ENCODE measurements at regions of chr7 and their contacts with region 1.

Region 1: GRCh38 chr7:104529567-104529966 is 201.2 kb downstream of the LHFPL3 start:
- DNase-seq: no peak
- H3K4me3 ChIP-seq: no peak overlapping the region
- H3K27ac ChIP-seq: no peak overlapping the region
- H3K4me1 ChIP-seq: no peaks in the 10 kb centered on the region
- H3K27me3 ChIP-seq: no peaks in the 10 kb centered on the region
- CTCF ChIP-seq: no peak

Region 2: DNA sequence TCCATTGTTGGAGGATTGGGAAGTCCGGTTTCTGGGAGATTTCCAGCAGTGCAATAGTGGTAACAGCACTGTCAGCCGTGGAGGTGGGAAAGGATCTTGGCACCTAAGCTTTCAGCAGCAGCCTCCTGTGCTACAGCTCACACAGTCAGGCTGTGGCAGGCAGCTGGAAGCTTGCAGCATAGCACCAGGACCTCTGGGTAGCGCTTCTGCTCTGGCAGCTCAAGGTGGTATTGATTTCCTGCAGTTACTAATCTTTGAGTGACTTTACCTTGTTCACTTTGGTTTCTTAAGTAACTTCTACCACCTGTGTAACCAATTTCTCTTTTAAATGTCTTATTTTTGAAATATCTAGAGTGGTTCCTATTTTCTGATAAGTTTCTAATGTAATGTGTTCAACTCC is 70.7 kb before region 1 on chr7:
- CTCF ChIA-PET with region 1: no interaction called
- dilution Hi-C with region 1: loop called (anchors 5 kb)
- in situ Hi-C with region 1: no loop called
- intact Hi-C with region 1: no loop called
- DNase-seq: no peak
- H3K4me3 ChIP-seq: no peak overlapping the region
- H3K27ac ChIP-seq: no peak overlapping the region
- H3K4me1 ChIP-seq: no peaks in the 10 kb centered on the region
- H3K27me3 ChIP-seq: no peaks in the 10 kb centered on the region
- CTCF ChIP-seq: no peak

Region 3: DNA sequence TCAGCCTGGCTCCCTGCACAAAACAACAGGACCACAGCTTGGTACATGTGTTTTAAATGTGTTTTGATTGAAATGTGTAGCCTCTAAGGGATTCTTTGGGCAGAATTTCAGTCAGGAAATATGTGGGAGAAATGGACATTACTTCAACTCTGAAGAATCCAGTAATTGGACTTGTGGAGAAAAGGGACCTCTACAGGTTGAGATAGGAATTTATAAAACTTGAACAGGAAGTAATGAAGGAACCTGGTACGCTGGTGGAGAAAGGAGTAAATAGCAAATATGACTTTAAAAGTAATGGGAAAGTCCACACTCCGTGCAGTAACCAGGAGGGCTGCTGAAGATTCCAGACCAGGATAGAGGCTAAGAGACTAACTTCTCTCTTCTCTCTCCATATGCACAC is 19.3 kb after region 1 on chr7:
- CTCF ChIA-PET with region 1: interaction called, 12 read pairs
- dilution Hi-C with region 1: no loop called
- in situ Hi-C with region 1: no loop called
- intact Hi-C with region 1: no loop called
- DNase-seq: no peak
- H3K4me3 ChIP-seq: no peak overlapping the region
- H3K27ac ChIP-seq: no peak overlapping the region
- H3K4me1 ChIP-seq: no peaks in the 10 kb centered on the region
- H3K27me3 ChIP-seq: no peaks in the 10 kb centered on the region
- CTCF ChIP-seq: peak in 1 of 2 donors; percentile 5